A673 (cell line): ENCODE measurements at regions of chr6 and their contacts with region 1.

Region 1: GRCh38 chr6:56595490-56596122 is 47.1 kb downstream of the DST start:
- DNase-seq: peak; percentile 80
- H3K4me3 ChIP-seq: no peak overlapping the region
- H3K27ac ChIP-seq: no peak overlapping the region
- H3K4me1 ChIP-seq: no peaks in the 10 kb centered on the region
- H3K27me3 ChIP-seq: no peaks in the 10 kb centered on the region
- CTCF ChIP-seq: peak; percentile 81

Region 2: GRCh38 chr6:55980627-55981211 is 614.9 kb before region 1 on chr6:
- CTCF ChIA-PET with region 1: no interaction called
- POLR2A ChIA-PET with region 1: no interaction called
- intact Hi-C with region 1: loop called (anchors 10 kb)
- DNase-seq: peak; percentile 82
- H3K4me3 ChIP-seq: no peak overlapping the region
- H3K27ac ChIP-seq: peak overlapping the region; percentile 48
- H3K4me1 ChIP-seq: peaks cover 25% of the 10 kb centered on the region
- H3K27me3 ChIP-seq: no peaks in the 10 kb centered on the region
- CTCF ChIP-seq: peak; percentile 80

Region 3: GRCh38 chr6:56359201-56359899 is 236.3 kb before region 1 on chr6:
- CTCF ChIA-PET with region 1: interaction called, 3 read pairs
- POLR2A ChIA-PET with region 1: no interaction called
- intact Hi-C with region 1: loop called (anchors 1 kb)
- DNase-seq: peak; percentile 80
- H3K4me3 ChIP-seq: no peak overlapping the region
- H3K27ac ChIP-seq: no peak overlapping the region
- H3K4me1 ChIP-seq: peaks cover 12% of the 10 kb centered on the region
- H3K27me3 ChIP-seq: no peaks in the 10 kb centered on the region
- CTCF ChIP-seq: peak; percentile 82

Region 4: GRCh38 chr6:56542364-56543331 is 53.0 kb before region 1 on chr6:
- CTCF ChIA-PET with region 1: interaction called, 12 read pairs
- POLR2A ChIA-PET with region 1: no interaction called
- intact Hi-C with region 1: no loop called
- DNase-seq: peak; percentile 95
- H3K4me3 ChIP-seq: peak overlapping the region; percentile 61
- H3K27ac ChIP-seq: peak overlapping the region; percentile 87
- H3K4me1 ChIP-seq: peaks cover 35% of the 10 kb centered on the region
- H3K27me3 ChIP-seq: no peaks in the 10 kb centered on the region
- CTCF ChIP-seq: peak; percentile 38

Region 5: DNA sequence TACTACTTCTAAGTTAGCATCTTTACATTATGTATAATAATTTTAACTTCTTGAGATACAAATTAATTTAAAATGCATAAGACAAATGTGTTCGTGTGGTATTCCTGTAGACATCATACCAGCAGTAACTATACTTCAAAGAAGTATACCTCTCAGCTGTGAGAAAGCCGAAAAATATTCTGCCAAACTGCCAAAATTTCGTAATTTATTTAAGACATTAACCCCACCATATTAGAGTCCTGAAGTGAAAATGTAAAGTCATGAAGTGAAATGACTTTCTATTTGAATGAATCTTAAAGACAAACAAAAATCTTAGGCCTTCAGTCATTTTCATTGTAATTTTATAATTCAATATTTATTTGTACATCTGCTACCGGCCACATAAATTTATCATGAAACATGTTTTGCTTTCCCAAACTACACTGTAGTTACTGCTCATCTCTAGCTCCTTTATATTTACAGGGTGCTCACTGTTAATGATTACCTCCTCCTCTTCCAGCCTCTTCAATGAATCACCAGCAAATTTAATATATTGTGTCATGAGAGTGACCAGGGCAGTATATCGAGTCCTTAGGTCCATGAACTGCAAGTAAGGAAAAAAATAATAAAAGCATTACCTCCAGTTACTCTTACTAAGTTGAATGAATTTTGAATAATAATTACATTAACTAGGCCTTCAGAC is 28.6 kb after region 1 on chr6:
- CTCF ChIA-PET with region 1: interaction called, 10 read pairs
- POLR2A ChIA-PET with region 1: no interaction called
- intact Hi-C with region 1: no loop called
- DNase-seq: no peak
- H3K4me3 ChIP-seq: no peak overlapping the region
- H3K27ac ChIP-seq: no peak overlapping the region
- H3K4me1 ChIP-seq: no peaks in the 10 kb centered on the region
- H3K27me3 ChIP-seq: no peaks in the 10 kb centered on the region
- CTCF ChIP-seq: no peak